Heart left ventricle (tissue), 16 donors: ENCODE measurements at regions of chr2 and their contacts with region 1.

Region 1: GRCh38 chr2:95389245-95390119 is 13.0 kb upstream of the FAHD2A start:
- DNase-seq: peak; percentile 41 to 79 (median 54)
- ATAC-seq: peak in 3 of 4 donors; percentile 46 to 75 (median 64)
- H3K4me3 ChIP-seq: peak overlapping the region in 4 of 12 donors; percentile 23 to 40 (median 32)
- H3K27ac ChIP-seq: no peak overlapping the region
- H3K4me1 ChIP-seq: peaks cover 0 to 22% (median 5%) of the 10 kb centered on the region in 12 donors
- H3K27me3 ChIP-seq: peaks cover 0 to 6% (median 0%) of the 10 kb centered on the region in 9 donors
- CTCF ChIP-seq: peak; percentile 74 to 95 (median 87)
- POLR2A ChIP-seq: no peak

Region 2: GRCh38 chr2:95345566-95346230 is 43.8 kb before region 1 on chr2:
- intact Hi-C with region 1: loop called in 3 of 10 experiments (anchors 5 kb)
- DNase-seq: peak; percentile 78 to 92 (median 86)
- ATAC-seq: peak; percentile 81 to 93 (median 90)
- H3K4me3 ChIP-seq: peak overlapping the region; percentile 42 to 86 (median 67)
- H3K27ac ChIP-seq: peak overlapping the region in 11 of 12 donors; percentile 49 to 89 (median 79)
- H3K4me1 ChIP-seq: peaks cover 0 to 31% (median 9%) of the 10 kb centered on the region in 12 donors
- H3K27me3 ChIP-seq: peaks cover 0 to 34% (median 5%) of the 10 kb centered on the region in 9 donors
- CTCF ChIP-seq: peak; percentile 84 to 97 (median 92)
- POLR2A ChIP-seq: no peak